ENCODE measurements at regions of chr6 and their contacts with region 1.

Region 1: DNA sequence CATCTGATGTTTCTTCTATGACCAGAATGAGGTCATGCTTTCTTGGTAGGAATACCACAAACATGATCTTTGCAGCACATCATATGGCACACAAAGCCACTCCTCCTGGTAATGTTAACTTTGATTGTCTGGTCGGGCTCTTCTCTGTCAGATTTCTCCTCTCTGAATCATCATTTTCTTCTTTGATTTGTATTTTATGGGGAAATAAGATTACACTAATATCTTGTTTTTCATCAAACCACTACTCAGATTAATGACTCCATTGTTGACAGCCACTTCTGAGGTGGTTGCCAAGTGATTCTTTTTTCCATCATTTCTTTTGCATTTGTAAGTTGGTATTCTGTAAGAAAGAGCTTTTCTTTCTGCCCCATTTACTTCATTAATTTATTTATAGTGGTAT is 29.5 kb downstream of the TRMT11 start:
- DNase-seq: no peak
- H3K4me3 ChIP-seq: no peak overlapping the region
- CTCF ChIP-seq: no peak

Region 2: GRCh38 chr6:125995972-125996580 is 19.8 kb before region 1 on chr6:
- CTCF ChIA-PET with region 1: interaction called, 27 read pairs
- POLR2A ChIA-PET with region 1: no interaction called
- DNase-seq: no peak
- H3K4me3 ChIP-seq: no peak overlapping the region
- CTCF ChIP-seq: peak; percentile 87

Measured in AG04449 (cell line).